ENCODE measurements at regions of chr10 and their contacts with region 1.

Region 1: GRCh38 chr10:60048091-60048501 is 141.7 kb upstream of the CCDC6 start:
- DNase-seq: peak; percentile 81 to 83
- H3K4me3 ChIP-seq: no peak overlapping the region
- H3K4me3 Mint-ChIP-seq: no peak overlapping the region
- H3K27ac Mint-ChIP-seq: no peak overlapping the region
- H3K4me1 ChIP-seq: peaks cover 5% of the 10 kb centered on the region
- H3K4me1 Mint-ChIP-seq: no peaks in the 10 kb centered on the region
- H3K27me3 ChIP-seq: no peaks in the 10 kb centered on the region
- H3K27me3 Mint-ChIP-seq: no peaks in the 10 kb centered on the region
- CTCF ChIP-seq: peak; percentile 84 to 86

Region 2: DNA sequence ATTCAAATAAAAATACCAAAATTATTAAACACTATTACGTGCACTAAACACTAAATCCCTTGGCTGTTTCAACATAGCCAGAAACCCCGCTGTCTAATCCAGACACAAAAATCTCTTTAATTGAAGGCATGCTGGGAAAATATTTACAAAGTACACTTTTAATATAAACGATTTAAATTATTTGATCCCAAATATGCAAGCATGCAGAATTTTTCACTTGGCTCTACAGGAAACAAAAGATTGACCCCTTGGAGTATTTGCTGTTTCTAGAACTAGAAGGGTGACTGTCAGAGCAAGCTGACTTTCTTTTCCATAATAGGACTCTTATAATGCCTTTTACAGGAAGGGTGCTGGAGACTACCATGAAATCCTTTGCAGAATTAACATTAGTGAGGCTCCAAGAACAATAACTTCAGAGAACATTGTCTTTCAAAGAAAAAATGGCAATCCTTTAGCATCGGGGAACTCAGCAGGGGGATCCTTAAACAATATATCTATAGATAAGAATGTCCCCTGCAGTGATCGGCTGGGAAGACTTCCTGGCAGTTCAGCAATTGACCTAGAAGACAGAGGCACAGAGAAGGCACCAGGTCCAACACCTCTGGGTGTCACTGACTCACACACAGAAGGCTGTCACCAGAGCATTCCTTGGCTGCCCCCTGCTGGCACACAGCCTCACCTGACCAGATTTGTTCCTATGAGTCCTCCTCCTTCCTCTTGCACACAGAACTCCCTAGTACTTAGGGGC is 239.0 kb before region 1 on chr10:
- CTCF ChIA-PET with region 1: no interaction called
- POLR2A ChIA-PET with region 1: no interaction called
- intact Hi-C with region 1: loop called (anchors 5 kb)
- DNase-seq: peak; percentile 84 to 90
- H3K4me3 ChIP-seq: no peak overlapping the region
- H3K4me3 Mint-ChIP-seq: no peak overlapping the region
- H3K27ac Mint-ChIP-seq: no peak overlapping the region
- H3K4me1 ChIP-seq: no peaks in the 10 kb centered on the region
- H3K4me1 Mint-ChIP-seq: no peaks in the 10 kb centered on the region
- H3K27me3 ChIP-seq: no peaks in the 10 kb centered on the region
- H3K27me3 Mint-ChIP-seq: no peaks in the 10 kb centered on the region
- CTCF ChIP-seq: peak; percentile 87 to 92

Region 3: DNA sequence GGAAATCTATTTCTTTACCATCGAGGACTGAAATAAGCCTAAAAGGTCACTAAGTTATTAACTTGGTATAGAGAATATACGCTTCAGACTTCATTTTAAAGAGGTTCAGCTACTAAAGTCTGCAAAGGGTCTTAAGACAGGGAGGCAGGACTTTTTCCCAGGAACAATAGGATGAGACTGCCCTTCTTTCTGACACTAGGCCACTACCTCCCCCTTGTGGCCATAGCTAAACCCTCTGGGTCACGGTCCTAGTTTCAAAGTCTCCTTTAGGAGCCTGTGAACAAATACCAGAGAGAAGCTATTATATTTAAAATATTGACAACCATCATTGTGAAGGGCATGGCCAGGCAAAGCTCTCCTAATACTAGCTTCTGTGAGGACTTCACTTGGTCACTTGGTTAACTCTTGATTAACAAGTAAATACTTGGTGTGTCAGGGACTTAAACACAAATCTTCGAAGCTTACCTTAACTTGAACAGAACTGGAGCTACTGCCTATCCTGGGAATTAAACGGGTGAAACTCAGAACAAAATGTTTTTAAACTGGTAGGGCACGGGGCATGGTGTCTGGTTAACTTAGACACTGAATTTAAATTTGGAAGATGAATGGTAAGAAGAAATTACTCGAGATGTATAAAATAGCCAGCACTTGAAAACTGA is 217.4 kb before region 1 on chr10:
- CTCF ChIA-PET with region 1: interaction called, 8 read pairs
- POLR2A ChIA-PET with region 1: no interaction called
- intact Hi-C with region 1: loop called (anchors 1 kb)
- DNase-seq: peak; percentile 68 to 79
- H3K4me3 ChIP-seq: no peak overlapping the region
- H3K4me3 Mint-ChIP-seq: no peak overlapping the region
- H3K27ac Mint-ChIP-seq: no peak overlapping the region
- H3K4me1 ChIP-seq: no peaks in the 10 kb centered on the region; the same call in 1 of the 2 replicates
- H3K4me1 Mint-ChIP-seq: peaks cover 7% of the 10 kb centered on the region
- H3K27me3 ChIP-seq: no peaks in the 10 kb centered on the region
- H3K27me3 Mint-ChIP-seq: no peaks in the 10 kb centered on the region
- CTCF ChIP-seq: peak; percentile 91 to 98

Region 4: GRCh38 chr10:59847326-59847725 is 200.8 kb before region 1 on chr10:
- CTCF ChIA-PET with region 1: no interaction called
- POLR2A ChIA-PET with region 1: no interaction called
- intact Hi-C with region 1: no loop called
- DNase-seq: no peak
- H3K4me3 ChIP-seq: no peak overlapping the region
- H3K4me3 Mint-ChIP-seq: no peak overlapping the region
- H3K27ac Mint-ChIP-seq: no peak overlapping the region
- H3K4me1 ChIP-seq: no peaks in the 10 kb centered on the region
- H3K4me1 Mint-ChIP-seq: no peaks in the 10 kb centered on the region
- H3K27me3 ChIP-seq: no peaks in the 10 kb centered on the region
- H3K27me3 Mint-ChIP-seq: no peaks in the 10 kb centered on the region
- CTCF ChIP-seq: no peak

Region 5: GRCh38 chr10:59865101-59865500 is 183.0 kb before region 1 on chr10:
- CTCF ChIA-PET with region 1: interaction called, 3 read pairs
- POLR2A ChIA-PET with region 1: no interaction called
- intact Hi-C with region 1: loop called (anchors 1 kb)
- DNase-seq: peak; percentile 60 to 75
- H3K4me3 ChIP-seq: no peak overlapping the region
- H3K4me3 Mint-ChIP-seq: no peak overlapping the region
- H3K27ac Mint-ChIP-seq: peak overlapping the region; percentile 39
- H3K4me1 ChIP-seq: no peaks in the 10 kb centered on the region
- H3K4me1 Mint-ChIP-seq: peaks cover 27% of the 10 kb centered on the region
- H3K27me3 ChIP-seq: no peaks in the 10 kb centered on the region
- H3K27me3 Mint-ChIP-seq: no peaks in the 10 kb centered on the region
- CTCF ChIP-seq: peak; percentile 73 to 86

Measured in Caco-2 (cell line).